Posterior cingulate gyrus (tissue), 11 donors: ENCODE measurements at regions of chr21 and their contacts with region 1.

Region 1: GRCh38 chr21:33324291-33325221 is at the start of gene IFNAR1:
- DNase-seq: peak; percentile 91 to 100 (median 95)

Region 2: DNA sequence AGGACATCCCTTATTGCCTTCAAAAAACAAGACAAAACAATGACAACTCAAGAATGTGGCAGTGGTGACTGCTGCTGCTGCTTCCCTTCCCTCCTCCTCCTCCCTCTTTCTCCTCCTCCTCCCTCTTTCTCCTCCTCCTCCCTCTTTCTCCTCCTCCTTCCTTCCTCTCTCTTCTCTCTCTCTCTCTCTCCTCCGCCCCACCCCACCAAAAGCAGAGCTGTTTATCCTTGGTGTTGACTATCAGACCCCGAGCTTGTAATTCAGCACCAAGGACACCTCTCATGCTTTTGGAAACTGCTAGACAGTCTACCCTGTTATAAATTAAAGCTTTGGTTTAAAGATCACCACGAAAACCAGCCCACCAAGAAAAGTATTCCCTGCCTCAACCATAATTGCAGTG is 167.3 kb before region 1 on chr21:
- intact Hi-C with region 1: no loop called
- DNase-seq: no peak

Region 3: GRCh38 chr21:33229784-33230544 is 94.6 kb before region 1 on chr21 and contains the start of gene IFNAR2:
- intact Hi-C with region 1: loop called (anchors 10 kb)
- DNase-seq: peak; percentile 67 to 96 (median 76)

Region 4: GRCh38 chr21:33266050-33266788 is 58.3 kb before region 1 on chr21 and contains the start of gene IL10RB:
- intact Hi-C with region 1: loop called (anchors 2 kb)
- DNase-seq: peak; percentile 31 to 95 (median 53)